Astrocyte of the spinal cord (primary cell): ENCODE measurements at regions of chr16 and their contacts with region 1.

Region 1: DNA sequence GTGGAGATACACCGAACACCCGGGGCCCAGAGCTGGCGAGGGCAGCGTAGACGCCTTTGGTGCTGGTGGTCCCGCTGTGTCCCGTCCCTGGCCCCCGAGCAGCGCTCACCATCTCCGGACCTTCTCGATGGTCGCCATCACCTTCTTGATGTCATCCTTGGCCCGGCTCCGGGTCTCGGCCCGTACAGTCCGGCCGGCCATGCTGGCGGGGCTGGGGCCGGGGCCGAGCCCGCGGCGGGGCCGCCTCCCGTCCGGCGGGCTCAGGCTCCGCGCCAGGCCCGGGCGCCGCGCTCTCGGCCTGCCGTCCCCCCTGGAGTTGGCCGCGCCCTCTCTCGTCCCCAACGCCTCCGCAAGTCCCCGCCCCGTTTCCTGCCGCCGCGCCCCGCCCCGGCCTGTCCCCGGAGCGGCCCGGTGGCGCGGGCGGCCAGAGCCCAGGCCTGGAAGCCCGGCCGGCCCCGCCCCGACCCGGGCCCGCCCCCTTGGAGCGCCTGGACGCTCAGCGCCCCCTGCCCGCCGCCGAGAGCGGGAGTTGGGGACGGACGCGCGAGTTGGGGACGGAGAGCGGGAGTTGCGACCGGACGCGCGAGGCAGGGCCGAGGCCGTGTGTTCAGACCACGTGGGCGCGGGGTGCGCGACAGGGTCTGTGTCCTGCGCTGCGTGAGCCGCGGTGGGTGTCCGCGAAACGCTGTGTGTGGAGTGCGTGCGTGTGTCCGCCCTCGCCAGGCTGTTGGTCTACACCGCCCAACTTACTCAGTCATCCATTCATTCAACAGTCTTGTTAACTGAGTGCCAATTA is at the start of gene BCL7C:
- DNase-seq: peak; percentile 86
- H3K4me3 ChIP-seq: peak within 1 kb of the TSS; percentile 88
- CTCF ChIP-seq: peak; percentile 43

Region 2: GRCh38 chr16:30775392-30776188 is 118.4 kb before region 1 on chr16:
- in situ Hi-C with region 1: loop called (anchors 25 kb)
- DNase-seq: peak; percentile 82
- H3K4me3 ChIP-seq: peak overlapping the region; percentile 48
- CTCF ChIP-seq: no peak

Region 3: GRCh38 chr16:30844671-30845449 is 49.1 kb before region 1 on chr16:
- in situ Hi-C with region 1: no loop called
- DNase-seq: peak; percentile 86
- H3K4me3 ChIP-seq: no peak overlapping the region
- CTCF ChIP-seq: peak; percentile 84

Region 4: GRCh38 chr16:31177136-31177535 is 283.2 kb after region 1 on chr16:
- in situ Hi-C with region 1: no loop called
- DNase-seq: peak; percentile 82
- H3K4me3 ChIP-seq: no peak overlapping the region
- CTCF ChIP-seq: no peak